ENCODE measurements at regions of chr16 and their contacts with region 1.

Region 1: DNA sequence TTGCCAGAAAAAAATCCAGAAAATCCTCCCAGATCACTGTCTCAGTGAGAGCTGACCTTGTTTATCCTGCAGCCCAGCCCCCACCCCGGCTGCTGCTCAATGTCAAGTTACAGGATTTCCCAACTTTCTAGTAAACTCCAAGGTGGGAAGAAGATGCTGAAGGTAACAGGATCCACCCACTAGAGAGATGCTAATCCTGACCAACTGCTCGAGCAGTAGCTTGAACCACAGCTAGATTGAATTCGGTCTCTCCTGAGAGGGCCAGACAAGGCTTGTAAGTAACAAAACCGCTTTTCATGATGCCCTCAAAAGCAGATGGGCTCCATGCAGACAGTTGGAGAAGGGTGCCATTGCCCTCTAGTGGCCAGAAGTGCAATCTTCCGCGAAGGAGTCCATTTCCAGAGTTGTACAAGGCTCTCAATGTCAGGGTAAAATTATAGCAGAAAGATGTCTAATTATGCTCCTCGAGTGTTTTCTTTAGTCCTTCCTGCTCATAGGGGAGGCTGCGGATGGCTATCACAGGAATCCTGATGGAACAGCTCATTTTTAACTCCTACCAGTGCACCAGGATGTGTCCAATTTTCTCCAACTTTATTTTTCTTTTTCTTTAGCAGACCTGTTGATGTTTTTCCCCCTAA is 3.9 kb downstream of the CDH11 start:
- DNase-seq: peak; percentile 34 to 59 (median 56)
- ATAC-seq: peak; percentile 81 to 87 (median 84)
- H3K4me3 ChIP-seq: no peak overlapping the region
- H3K27ac ChIP-seq: no peak overlapping the region
- H3K4me1 ChIP-seq: peaks cover 0 to 2% (median 0%) of the 10 kb centered on the region in 4 donors
- H3K27me3 ChIP-seq: peaks cover 0 to 9% of the 10 kb centered on the region in 2 donors
- CTCF ChIP-seq: peak; percentile 65 to 88 (median 87)
- POLR2A ChIP-seq: no peak

Region 2: DNA sequence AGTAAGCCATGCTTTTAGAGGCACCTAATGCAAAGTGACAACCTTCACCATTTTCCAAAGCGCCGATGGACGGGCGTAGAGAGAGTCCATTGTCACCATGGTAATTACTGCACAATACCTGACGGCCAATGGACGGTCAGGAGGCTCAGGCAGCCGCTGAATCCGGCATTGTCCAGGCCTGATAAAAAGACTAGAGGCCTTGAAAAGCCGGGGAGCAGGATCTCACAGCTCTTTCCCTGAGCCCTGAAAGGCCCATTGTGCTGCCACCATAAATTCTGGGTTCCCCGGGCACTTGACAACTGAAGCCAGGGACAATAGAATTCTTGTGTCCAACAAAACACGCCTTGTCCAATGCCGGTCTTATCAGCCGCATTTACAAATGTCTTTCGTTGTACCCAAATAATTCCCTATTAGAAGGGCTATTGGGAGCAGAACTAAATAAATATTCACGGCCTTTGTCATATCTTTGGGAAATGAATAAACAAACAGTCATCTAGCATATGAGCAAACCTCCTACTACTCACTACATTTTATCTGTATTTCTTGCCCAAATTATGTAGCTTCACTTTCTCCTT is 58.4 kb before region 1 on chr16:
- intact Hi-C with region 1: loop called in 1 of 2 experiments (anchors 10 kb)
- DNase-seq: no peak
- ATAC-seq: no peak
- H3K4me3 ChIP-seq: no peak overlapping the region
- H3K27ac ChIP-seq: no peak overlapping the region
- H3K4me1 ChIP-seq: no peaks in the 10 kb centered on the region
- H3K27me3 ChIP-seq: no peaks in the 10 kb centered on the region
- CTCF ChIP-seq: no peak
- POLR2A ChIP-seq: no peak

Region 3: DNA sequence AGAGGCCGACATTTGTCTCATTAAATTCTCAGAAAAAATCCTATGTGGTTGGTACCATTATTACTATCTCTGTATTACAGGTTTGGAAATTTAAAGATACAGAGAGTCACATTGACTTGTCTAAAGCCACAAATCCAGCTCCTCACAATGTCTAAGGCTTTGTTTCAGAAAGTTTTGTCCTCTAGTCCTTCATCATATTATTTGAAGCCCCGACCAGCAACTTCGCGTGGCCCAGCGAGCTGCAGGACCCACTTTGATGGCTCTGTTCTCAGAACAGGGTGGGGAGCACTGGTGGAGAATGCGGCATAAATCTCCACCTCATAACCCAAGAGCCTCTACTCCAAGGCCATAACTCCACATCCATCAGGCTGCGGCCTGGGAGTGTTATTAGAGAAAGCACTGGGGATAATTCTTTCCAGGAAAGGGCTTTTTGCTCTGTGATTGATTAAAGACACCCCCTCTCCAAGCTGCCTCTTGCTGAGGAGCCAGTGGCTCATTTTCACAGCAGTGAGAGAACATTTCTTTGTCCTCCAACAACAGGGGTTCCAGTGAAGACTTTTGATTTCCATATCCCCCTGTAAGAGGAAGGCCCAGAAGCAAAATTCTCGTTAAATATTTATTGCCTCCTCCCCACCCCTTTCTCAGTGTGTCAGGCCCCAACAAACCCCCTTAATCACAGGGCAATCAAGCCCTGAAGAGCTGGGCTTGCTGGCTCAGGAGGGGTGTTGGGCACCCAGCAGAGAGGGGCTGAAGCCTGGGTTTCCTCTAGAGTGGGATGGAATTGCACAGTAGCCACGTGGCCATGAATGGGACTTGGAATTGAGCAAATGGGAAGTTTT is 117.6 kb after region 1 on chr16:
- intact Hi-C with region 1: no loop called
- DNase-seq: no peak
- ATAC-seq: no peak
- H3K4me3 ChIP-seq: no peak overlapping the region
- H3K27ac ChIP-seq: no peak overlapping the region
- H3K4me1 ChIP-seq: no peaks in the 10 kb centered on the region
- H3K27me3 ChIP-seq: no peaks in the 10 kb centered on the region
- CTCF ChIP-seq: no peak
- POLR2A ChIP-seq: no peak

Measured in right lobe of liver (tissue), 6 donors.